ENCODE measurements at regions of chr20 and their contacts with region 1.

Region 1: DNA sequence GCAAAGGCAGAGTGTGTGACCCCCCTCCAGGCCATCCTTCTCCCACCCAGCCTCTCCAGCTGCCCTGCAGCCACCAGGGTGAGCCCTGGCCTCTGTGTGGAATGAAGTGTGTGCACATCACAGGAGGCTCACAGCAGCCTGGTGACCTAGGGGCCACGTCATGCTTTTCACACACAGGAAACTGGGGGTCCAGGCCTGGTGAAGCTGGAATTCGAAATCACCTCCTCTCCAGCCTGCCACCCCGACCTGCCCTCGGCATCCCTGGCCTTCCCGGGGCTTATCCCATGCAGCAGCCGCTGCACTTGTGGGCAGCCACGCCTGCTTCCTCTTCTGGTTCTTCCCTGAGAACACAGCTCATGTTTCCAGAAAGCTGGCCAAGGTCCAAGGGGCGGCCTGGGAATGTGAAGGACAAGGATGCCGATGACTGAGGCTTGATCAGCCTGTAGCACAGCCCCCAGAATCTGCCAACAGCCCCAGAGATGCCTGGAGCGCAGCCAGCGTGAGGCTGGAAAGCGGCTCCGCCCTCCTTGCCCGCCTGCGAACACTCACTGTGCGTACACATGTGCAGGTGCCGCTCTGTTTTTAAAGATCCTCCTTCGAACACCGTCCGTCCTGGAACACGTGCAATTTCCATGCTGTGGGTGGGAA is 4.2 kb upstream of the NTSR1 start:
- DNase-seq: peak; percentile 99
- H3K4me3 ChIP-seq: no peak overlapping the region
- H3K27ac ChIP-seq: peak overlapping the region; percentile 91
- H3K4me1 ChIP-seq: peaks cover 26% of the 10 kb centered on the region
- H3K27me3 ChIP-seq: peaks cover 0 to 14% of the 10 kb centered on the region in 2 experiments
- CTCF ChIP-seq: peak in 1 of 2 donors; percentile 35
- POLR2A ChIP-seq: no peak

Region 2: DNA sequence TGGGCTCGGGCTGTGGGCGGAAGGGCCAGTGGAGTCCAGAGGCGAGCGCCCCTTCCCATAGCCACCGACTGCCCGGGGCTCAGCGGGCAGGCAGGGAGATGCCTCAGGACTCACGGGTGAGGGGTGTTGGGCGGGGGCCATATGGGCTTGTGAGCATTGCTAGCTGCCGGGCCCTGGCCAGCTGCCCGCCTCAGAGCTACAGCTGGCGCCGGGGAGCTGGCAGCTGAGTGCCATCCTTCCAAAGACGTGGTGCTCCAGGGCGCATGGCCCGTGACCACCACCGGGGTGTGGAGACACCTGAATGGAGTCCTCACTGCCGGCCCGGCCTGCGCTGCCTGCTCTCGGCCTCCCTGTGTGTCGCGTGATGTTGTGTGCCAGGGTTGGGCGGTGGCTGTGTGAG is 266.5 kb before region 1 on chr20:
- CTCF ChIA-PET with region 1: no interaction called
- POLR2A ChIA-PET with region 1: no interaction called
- dilution Hi-C with region 1: no loop called
- intact Hi-C with region 1: no loop called
- DNase-seq: no peak
- H3K4me3 ChIP-seq: no peak overlapping the region
- H3K27ac ChIP-seq: no peak overlapping the region
- H3K4me1 ChIP-seq: no peaks in the 10 kb centered on the region
- H3K27me3 ChIP-seq: peaks cover 19 to 26% of the 10 kb centered on the region in 2 experiments
- CTCF ChIP-seq: no peak
- POLR2A ChIP-seq: no peak

Region 3: GRCh38 chr20:62668441-62669027 is 35.9 kb before region 1 on chr20:
- CTCF ChIA-PET with region 1: interaction called, 5 read pairs
- POLR2A ChIA-PET with region 1: no interaction called
- dilution Hi-C with region 1: no loop called
- intact Hi-C with region 1: loop called (anchors 1 kb)
- DNase-seq: peak; percentile 76
- H3K4me3 ChIP-seq: no peak overlapping the region
- H3K27ac ChIP-seq: no peak overlapping the region
- H3K4me1 ChIP-seq: peaks cover 13% of the 10 kb centered on the region
- H3K27me3 ChIP-seq: no peaks in the 10 kb centered on the region
- CTCF ChIP-seq: peak; percentile 87 to 91
- POLR2A ChIP-seq: no peak

Region 4: DNA sequence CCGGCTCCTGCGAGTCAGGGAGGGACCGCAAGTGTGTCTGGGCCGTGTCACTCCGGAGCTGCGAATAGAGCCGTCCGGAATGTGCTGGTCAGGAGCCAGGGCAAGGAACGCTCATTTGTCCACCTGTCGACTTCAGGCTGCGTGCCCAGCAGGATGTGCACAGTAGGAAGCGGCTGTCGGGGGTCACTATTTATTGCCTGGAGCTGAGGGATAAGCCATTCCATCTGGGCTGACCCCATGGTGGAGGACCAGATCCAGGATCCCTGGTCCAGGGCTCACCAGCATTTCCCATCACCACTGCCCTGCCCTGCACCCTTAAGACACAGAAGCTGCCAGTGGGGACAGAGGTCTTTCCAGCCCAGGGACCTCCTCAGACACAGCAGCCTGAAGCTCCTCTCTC is 18.9 kb after region 1 on chr20:
- CTCF ChIA-PET with region 1: interaction called, 20 read pairs
- POLR2A ChIA-PET with region 1: no interaction called
- dilution Hi-C with region 1: no loop called
- intact Hi-C with region 1: no loop called
- DNase-seq: peak; percentile 50
- H3K4me3 ChIP-seq: no peak overlapping the region
- H3K27ac ChIP-seq: no peak overlapping the region
- H3K4me1 ChIP-seq: no peaks in the 10 kb centered on the region
- H3K27me3 ChIP-seq: peaks cover 0 to 30% of the 10 kb centered on the region in 2 experiments
- CTCF ChIP-seq: no peak
- POLR2A ChIP-seq: no peak

Region 5: DNA sequence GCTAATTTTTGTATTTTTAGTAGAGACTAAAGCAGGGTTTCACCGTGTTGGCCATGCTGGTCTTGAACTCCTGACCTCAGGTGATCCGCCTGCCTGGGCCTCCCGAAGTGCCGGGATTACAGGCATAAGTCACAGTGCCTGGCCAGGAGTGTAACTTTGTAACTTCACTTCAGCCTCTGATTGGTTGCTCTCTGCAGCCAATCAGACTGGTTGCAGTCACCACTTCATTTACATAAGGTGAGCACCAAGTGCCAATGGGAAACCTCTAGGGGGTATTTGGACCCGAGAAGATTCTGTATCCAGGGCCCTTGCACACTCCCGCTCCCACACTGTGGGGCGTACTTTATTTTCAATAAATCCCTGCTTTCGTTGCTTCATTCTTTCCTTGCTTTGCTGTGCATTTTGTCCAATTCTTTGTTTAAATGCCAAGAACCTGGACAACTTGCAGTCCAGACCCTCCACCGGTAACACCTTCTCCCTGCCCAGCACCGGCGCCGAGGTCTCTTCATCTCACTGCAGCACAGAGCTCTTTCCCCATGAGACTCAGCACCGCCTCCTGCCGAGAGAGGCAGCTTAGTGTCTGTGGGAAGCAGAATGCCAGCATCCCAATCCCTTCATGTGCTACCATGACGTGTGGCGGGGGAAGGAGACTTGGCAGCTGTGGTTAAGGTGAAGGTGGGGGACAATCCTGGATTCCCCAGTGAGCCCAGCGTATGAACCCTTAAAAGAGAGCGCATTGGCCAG is 77.9 kb after region 1 on chr20:
- CTCF ChIA-PET with region 1: interaction called, 98 read pairs
- POLR2A ChIA-PET with region 1: no interaction called
- dilution Hi-C with region 1: no loop called
- intact Hi-C with region 1: no loop called
- DNase-seq: no peak
- H3K4me3 ChIP-seq: no peak overlapping the region
- H3K27ac ChIP-seq: no peak overlapping the region
- H3K4me1 ChIP-seq: peaks cover 5% of the 10 kb centered on the region
- H3K27me3 ChIP-seq: no peaks in the 10 kb centered on the region
- CTCF ChIP-seq: no peak
- POLR2A ChIP-seq: no peak

Region 6: DNA sequence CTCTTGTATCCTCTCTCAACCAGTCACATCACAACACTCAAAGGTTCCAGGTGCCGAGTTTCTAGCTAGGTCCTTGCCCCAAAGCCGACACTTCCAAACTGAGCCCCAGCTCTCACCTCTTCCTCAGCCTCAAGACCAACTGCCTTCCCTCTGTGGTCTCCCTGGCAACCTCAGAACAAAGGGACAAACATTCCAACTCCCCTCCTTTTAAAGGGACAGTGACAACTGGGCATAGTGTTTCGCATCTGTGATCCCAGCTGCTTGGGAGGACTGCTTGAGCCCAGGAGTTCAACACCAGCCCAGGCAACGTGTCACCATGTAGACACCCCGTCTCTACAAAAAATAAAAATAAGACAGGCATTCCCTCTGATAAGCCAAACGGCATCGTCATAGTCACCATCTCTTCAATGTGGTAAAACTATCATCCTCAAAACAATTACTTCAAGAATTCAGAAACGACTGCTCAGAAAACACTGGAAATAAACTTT is 210.6 kb after region 1 on chr20:
- CTCF ChIA-PET with region 1: no interaction called
- POLR2A ChIA-PET with region 1: no interaction called
- dilution Hi-C with region 1: no loop called
- intact Hi-C with region 1: no loop called
- DNase-seq: peak; percentile 58
- H3K4me3 ChIP-seq: no peak overlapping the region
- H3K27ac ChIP-seq: peak overlapping the region; percentile 18
- H3K4me1 ChIP-seq: no peaks in the 10 kb centered on the region
- H3K27me3 ChIP-seq: no peaks in the 10 kb centered on the region
- CTCF ChIP-seq: no peak
- POLR2A ChIP-seq: no peak

Region 7: DNA sequence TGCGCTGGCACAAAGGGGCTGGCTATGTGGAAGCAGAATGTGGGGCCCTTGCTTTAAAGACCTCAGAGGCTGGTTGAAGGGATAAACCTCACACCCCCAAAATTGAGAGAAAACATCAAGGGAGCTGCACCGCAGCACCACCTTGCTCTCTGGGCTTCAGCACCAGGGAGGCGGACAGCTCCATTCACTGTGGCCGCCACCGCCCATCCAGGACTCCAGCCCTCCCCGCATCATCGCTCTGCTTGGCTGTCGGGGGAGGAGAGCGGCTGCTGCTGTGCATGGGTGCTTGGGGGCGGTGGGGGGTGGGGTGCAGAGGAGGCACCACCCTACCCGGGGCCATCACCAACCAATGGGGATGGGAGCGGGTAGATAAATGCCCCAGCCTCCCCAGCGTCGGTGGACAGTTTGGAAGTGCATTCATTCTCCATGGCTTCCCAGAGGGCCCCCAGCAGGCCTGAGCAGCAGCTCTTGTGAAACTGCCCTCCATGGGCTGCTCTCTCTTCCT is 377.9 kb after region 1 on chr20:
- CTCF ChIA-PET with region 1: no interaction called
- POLR2A ChIA-PET with region 1: no interaction called
- dilution Hi-C with region 1: no loop called
- intact Hi-C with region 1: no loop called
- DNase-seq: no peak
- H3K4me3 ChIP-seq: no peak overlapping the region
- H3K27ac ChIP-seq: no peak overlapping the region
- H3K4me1 ChIP-seq: no peaks in the 10 kb centered on the region
- H3K27me3 ChIP-seq: no peaks in the 10 kb centered on the region
- CTCF ChIP-seq: no peak
- POLR2A ChIP-seq: no peak

Region 8: GRCh38 chr20:63627129-63627750 is 922.8 kb after region 1 on chr20:
- CTCF ChIA-PET with region 1: no interaction called
- POLR2A ChIA-PET with region 1: no interaction called
- dilution Hi-C with region 1: no loop called
- intact Hi-C with region 1: no loop called
- DNase-seq: peak; percentile 93
- H3K4me3 ChIP-seq: peak overlapping the region; percentile 82 to 100 (median 88)
- H3K27ac ChIP-seq: peak overlapping the region; percentile 51
- H3K4me1 ChIP-seq: peaks cover 16% of the 10 kb centered on the region
- H3K27me3 ChIP-seq: no peaks in the 10 kb centered on the region
- CTCF ChIP-seq: no peak
- POLR2A ChIP-seq: peak; percentile 83